ENCODE measurements at regions of chr2 and their contacts with region 1.

Region 1: DNA sequence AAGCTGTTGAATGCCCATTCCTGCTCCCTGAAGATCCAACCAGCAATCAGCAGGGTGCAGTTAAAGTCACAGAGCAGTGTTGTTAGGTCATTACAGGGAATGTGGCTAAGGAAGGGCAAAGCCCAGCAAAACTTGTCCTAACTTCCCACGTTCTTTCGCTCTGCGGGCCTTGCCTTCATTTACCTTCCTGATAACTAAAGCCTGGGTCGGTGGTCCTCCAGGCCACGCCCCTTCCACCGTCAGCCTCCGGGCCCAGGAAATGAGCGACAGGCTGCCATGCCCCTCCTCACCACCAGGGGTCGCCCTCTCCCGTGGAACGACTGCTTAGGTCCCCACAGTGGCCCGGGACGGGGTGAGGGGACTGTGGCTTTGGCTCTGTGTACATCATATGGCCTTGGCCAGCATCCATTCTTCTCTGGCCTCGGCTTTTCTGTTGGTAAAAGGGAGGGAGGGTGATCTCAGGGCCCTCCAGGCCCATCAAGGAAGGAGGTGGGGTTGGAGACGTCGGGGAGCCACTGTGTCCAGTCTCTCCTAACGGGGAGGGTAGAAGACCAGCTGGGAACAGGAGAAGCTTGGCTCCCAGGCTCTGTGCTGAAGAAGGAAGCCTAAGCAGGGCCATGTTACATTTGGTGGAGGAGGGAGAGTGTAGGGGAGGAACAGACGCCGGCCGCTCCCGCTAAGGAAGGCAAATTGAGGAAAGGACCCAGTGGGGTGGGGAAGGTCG is 2.2 kb downstream of the SH2D6 start:
- DNase-seq: peak; percentile 90
- CTCF ChIP-seq: peak; percentile 99

Region 2: DNA sequence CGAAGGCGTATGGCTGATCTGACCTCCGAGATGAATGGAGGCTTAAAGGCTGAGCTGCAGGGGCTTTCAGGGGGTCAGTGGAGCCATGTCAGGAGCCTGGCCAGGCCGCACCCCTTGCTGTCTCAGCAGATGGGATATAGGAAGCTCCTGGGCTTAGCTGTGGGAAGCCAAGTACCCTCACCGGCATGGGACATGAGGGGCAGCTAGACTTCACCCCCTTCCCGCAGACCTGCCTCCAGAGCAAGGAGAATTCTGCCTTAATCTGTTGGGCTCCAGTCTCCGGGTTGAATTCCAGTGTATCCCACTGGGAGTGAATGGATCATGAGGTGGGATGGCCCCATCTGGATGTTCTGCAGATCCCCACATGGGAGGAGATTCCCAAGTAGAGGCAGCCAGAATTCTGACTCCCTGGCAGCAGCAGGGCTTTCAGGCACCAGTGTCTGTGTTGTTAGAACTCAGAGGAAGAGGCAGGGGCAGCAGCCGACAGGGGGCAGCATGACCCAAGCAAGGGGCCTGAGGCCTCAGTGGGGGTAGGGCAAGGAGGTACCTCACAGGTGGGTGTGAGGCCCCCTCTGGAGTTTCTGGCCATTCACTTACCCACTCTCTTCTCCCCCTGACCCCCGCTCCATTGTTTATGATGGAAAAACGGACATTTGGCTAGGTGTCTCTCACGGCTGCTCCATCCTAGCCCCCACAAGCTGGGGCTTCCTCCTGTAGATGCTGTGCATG is 29.6 kb before region 1 on chr2:
- CTCF ChIA-PET with region 1: interaction called, 21 read pairs
- POLR2A ChIA-PET with region 1: no interaction called
- DNase-seq: peak; percentile 72
- CTCF ChIP-seq: peak; percentile 82

Region 3: DNA sequence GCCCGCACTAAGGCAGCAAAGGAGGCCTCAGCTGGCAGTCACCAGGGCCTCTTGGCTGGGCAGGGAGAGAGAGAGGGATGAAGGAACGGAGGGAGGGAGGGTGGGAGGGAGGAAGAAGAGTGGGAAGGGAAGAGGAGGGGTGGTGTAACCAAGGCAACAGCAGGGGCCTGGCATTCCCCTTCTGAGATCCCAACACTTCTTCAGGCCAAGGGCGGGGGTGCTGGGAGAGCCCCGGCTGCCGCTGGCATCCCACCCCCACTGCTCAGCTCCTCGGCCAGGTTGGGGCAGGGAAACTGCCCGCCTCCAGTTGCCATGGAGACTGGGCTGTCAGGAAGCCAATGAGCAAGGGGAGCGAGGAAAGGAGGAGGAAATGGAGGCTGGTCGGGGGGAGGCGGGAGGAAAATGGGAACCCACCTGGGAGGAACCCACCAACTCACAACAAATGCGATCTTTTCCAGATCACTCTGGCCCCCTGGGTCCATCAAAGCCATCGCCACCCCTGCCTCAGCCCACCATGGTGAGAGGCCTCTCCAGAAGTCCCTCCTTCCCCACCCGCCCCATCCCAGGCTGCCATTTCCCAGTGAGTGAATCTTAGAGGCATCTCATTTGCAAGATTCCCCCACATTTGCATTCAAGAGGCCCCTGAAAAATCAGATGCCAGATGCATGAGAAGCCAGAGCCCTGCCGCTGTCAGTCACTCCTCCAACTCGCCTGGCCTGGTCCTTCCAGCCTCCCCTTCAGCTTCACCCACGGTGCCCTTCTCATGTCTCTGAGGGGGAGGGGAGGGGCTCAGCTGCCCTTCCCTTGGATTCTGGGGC is 10.3 kb after region 1 on chr2:
- CTCF ChIA-PET with region 1: interaction called, 37 read pairs
- POLR2A ChIA-PET with region 1: no interaction called
- DNase-seq: no peak
- CTCF ChIP-seq: no peak

Region 4: GRCh38 chr2:85437488-85438284 is 17.0 kb after region 1 on chr2:
- CTCF ChIA-PET with region 1: interaction called, 28 read pairs
- POLR2A ChIA-PET with region 1: no interaction called
- DNase-seq: peak; percentile 88
- CTCF ChIP-seq: no peak

Region 5: GRCh38 chr2:85481818-85482777 is 61.4 kb after region 1 on chr2:
- CTCF ChIA-PET with region 1: no interaction called
- POLR2A ChIA-PET with region 1: no interaction called
- DNase-seq: no peak
- CTCF ChIP-seq: no peak

Region 6: GRCh38 chr2:85551698-85552678 is 131.3 kb after region 1 on chr2:
- CTCF ChIA-PET with region 1: interaction called, 158 read pairs
- POLR2A ChIA-PET with region 1: interaction called, 3 read pairs
- DNase-seq: peak; percentile 76
- CTCF ChIP-seq: peak; percentile 87

Region 7: DNA sequence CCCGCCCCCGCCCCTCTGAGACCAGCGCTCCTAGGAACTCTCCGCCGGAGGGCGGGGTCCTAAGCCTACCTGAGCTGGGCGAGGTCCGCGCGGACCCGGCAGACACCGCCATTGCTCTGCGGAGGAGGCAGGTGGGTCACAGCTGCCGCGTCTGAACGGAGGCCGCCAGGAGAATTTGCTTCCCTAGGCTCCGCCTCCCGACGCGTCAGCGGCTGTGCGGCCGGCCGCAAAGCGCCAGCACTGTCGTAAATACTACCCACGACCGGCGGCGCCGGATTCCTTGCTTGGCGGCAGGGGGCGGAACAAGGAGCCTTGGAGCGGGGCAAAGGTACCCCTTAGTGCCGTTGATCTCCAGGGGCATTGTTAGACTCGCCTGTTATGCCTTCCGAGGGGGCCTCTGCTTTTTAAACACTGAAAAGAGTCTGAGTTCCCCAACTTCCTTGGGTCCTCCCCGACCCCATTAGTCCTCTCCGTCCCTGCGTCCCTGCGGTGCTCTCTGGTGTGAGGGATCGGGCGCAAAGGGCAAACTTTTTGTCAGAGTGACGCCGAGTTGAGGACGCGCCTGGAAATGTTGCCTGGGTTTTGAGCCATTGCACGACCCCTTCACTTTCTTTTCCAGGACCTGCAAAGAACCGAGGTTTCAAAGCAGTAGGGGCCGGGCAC is 140.8 kb after region 1 on chr2 and contains the start of gene GGCX:
- CTCF ChIA-PET with region 1: interaction called, 29 read pairs
- POLR2A ChIA-PET with region 1: no interaction called
- DNase-seq: peak; percentile 96
- CTCF ChIP-seq: no peak

Measured in GM10248 (cell line).